H1 (cell line): ENCODE measurements at regions of chr4 and their contacts with region 1.

Region 1: DNA sequence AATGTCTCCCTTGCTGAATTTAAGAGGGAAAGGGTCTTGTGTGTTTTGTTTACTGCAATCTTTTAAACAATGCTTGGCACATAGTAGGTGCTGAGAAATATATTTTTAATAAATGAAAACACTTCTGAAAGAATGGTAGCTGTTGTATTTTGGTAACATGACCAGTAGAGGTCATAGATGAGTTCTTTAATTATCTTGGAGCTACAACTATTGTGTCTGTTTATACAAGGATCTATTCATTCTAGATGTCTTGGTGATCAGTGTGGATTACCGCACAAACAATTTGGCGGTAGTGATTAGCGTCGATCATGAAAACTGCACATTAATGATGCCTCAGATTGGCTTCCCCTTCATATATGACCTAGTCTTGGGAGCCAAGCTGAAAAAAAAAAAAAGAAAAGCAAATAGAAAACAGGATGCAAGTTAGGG is 21.4 kb upstream of the SCRG1 start:
- DNase-seq: no peak
- H3K4me3 ChIP-seq: no peak overlapping the region
- H3K27ac ChIP-seq: no peak overlapping the region
- H3K4me1 ChIP-seq: no peaks in the 10 kb centered on the region
- H3K27me3 ChIP-seq: no peaks in the 10 kb centered on the region
- CTCF ChIP-seq: peak in 2 of 3 experiments; percentile 21 to 25; a peak in 2 of 4 replicates
- EP300 ChIP-seq: no peak
- POLR2A ChIP-seq: no peak
- RAD21 ChIP-seq: peak; percentile 40 to 51

Region 2: GRCh38 chr4:173334085-173334772 is 86.1 kb before region 1 on chr4 and contains the start of gene HMGB2:
- CTCF ChIA-PET with region 1: interaction called, 6 read pairs
- POLR2A ChIA-PET with region 1: interaction called, 13 read pairs
- DNase-seq: peak; percentile 99 to 100
- H3K4me3 ChIP-seq: peak within 1 kb of the TSS; percentile 73 to 99 (median 94)
- H3K27ac ChIP-seq: peak within 1 kb of the TSS; percentile 100
- H3K4me1 ChIP-seq: peaks cover 0 to 3% (median 3%) of the 10 kb centered on the region in 4 experiments; a peak in 6 of 7 replicates
- H3K27me3 ChIP-seq: no peaks in the 10 kb centered on the region
- CTCF ChIP-seq: no peak
- EP300 ChIP-seq: peak in 1 of 2 experiments; percentile 11; a peak in 1 of 3 replicates
- POLR2A ChIP-seq: peak; percentile 95 to 99
- RAD21 ChIP-seq: no peak
- total RNA-seq, gene HMGB2: 212 and 218 TPM in 2 replicates

Region 3: DNA sequence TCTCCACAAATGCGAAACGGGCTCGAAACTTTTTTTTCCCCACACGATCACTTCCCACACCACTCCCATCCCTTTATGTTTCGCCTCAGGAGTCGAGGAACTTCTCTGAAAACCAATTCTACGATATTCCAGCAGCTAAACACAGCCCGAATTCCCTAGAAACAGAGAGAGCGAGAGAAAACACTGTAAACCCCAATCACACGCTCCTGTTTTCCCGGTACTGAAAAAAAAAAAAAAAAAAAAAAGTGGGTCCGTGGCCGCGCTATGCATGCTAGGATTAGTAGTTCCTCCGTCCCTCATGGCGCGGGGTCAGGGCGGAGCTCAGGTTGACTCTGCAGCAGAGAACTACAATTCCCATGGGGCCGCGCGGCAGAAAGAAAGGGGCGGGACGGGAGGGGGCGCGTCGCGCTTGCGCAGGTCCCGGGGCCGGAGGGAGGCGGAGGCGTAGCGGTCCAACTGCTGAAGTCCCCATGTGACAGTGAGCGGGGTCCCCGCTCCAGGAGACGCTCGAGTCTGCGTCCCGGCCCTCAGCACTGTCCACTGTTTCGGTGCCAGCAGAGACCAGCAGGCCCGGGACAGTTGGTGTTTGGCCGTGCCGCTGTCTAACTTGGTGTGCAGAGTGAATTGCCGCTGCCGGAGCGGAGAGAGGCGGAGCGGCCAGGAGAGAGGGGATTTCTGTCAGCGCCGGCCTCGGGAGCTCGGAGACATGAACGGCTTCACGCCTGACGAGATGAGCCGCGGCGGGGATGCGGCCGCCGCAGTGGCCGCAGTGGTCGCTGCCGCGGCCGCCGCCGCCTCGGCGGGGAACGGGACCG is 49.7 kb before region 1 on chr4 and contains the start of gene SAP30:
- CTCF ChIA-PET with region 1: interaction called, 12 read pairs
- POLR2A ChIA-PET with region 1: interaction called, 3 read pairs
- DNase-seq: peak; percentile 90 to 94
- H3K4me3 ChIP-seq: peak within 1 kb of the TSS; percentile 68 to 90 (median 88)
- H3K27ac ChIP-seq: 0 out of 2 replicates have a peak within 1 kb of the TSS, but pooled peaks have one; percentile 30
- H3K4me1 ChIP-seq: no peaks in the 10 kb centered on the region; a peak in 1 of 7 replicates
- H3K27me3 ChIP-seq: no peaks in the 10 kb centered on the region
- CTCF ChIP-seq: no peak
- EP300 ChIP-seq: no peak
- POLR2A ChIP-seq: peak; percentile 66 to 73
- RAD21 ChIP-seq: no peak
- total RNA-seq, gene SAP30: 17.9 and 21.1 TPM in 2 replicates

Region 4: GRCh38 chr4:173432430-173432829 is 12.1 kb after region 1 on chr4:
- CTCF ChIA-PET with region 1: interaction called, 12 read pairs
- POLR2A ChIA-PET with region 1: no interaction called
- DNase-seq: no peak
- H3K4me3 ChIP-seq: no peak overlapping the region
- H3K27ac ChIP-seq: no peak overlapping the region
- H3K4me1 ChIP-seq: peaks cover 0 to 13% (median 0%) of the 10 kb centered on the region in 4 experiments; a peak in 2 of 7 replicates
- H3K27me3 ChIP-seq: no peaks in the 10 kb centered on the region; a peak in 2 of 7 replicates
- CTCF ChIP-seq: no peak
- EP300 ChIP-seq: no peak
- POLR2A ChIP-seq: no peak
- RAD21 ChIP-seq: no peak

Region 5: DNA sequence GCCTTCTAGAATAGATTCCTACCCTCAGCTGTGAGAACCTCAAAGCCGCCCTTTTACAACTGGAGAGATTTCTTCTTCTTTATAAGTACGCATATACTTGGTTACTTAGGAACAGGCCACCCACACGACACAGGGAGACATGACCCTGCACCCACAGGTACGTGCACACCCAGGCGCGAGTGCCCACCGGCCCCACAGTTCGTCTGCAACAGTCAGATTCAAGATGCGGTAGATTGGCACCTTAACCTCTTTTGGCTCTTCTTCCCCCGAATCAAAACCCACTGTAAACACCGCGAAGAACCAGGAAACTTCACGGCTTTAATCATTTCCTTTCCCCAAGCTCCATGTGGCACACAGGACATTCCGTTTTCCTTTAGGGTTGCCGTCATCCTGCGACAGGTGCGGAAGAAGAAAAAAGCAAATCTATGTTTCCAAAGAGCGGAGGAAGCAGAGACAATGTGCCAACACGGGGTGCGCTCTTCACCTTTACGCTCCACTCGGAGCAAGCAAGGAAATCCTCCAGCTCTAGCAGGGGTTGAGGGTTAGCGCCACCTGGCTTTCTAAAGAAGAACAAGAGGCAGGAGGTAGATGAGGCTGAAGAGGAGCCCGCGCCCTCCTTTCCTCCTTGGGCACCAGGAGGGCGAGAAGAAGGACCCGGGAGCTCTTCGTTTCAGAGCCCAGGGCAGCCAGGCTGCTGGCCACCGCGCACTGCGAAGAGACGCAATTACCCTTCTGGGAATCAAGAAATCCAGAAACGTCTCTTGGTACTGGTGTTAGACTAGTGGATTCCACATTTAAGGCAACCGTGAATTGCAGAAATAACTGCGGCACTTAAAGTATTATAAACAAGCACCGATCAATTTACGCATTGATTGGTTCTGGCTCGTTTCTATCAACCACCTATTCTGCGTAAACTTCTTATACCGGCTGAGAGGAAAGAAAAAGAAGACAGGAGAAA is 74.0 kb after region 1 on chr4:
- CTCF ChIA-PET with region 1: interaction called, 16 read pairs
- POLR2A ChIA-PET with region 1: interaction called, 3 read pairs
- DNase-seq: peak; percentile 64 to 69
- H3K4me3 ChIP-seq: peak overlapping the region; percentile 16 to 51 (median 26); a peak in 6 of 8 replicates
- H3K27ac ChIP-seq: no peak overlapping the region
- H3K4me1 ChIP-seq: peaks cover 0 to 10% (median 4%) of the 10 kb centered on the region in 4 experiments; a peak in 6 of 7 replicates
- H3K27me3 ChIP-seq: peaks cover 3 to 38% (median 21%) of the 10 kb centered on the region in 4 experiments
- CTCF ChIP-seq: peak; percentile 73 to 98 (median 94)
- EP300 ChIP-seq: no peak
- POLR2A ChIP-seq: no peak
- RAD21 ChIP-seq: peak; percentile 82 to 85

Region 6: GRCh38 chr4:173635395-173635794 is 215.1 kb after region 1 on chr4:
- CTCF ChIA-PET with region 1: no interaction called
- POLR2A ChIA-PET with region 1: no interaction called
- DNase-seq: no peak
- H3K4me3 ChIP-seq: no peak overlapping the region
- H3K27ac ChIP-seq: no peak overlapping the region
- H3K4me1 ChIP-seq: no peaks in the 10 kb centered on the region
- H3K27me3 ChIP-seq: peaks cover 0 to 1% (median 0%) of the 10 kb centered on the region in 4 experiments; a peak in 1 of 7 replicates
- CTCF ChIP-seq: no peak
- EP300 ChIP-seq: no peak
- POLR2A ChIP-seq: no peak
- RAD21 ChIP-seq: no peak

Region 7: DNA sequence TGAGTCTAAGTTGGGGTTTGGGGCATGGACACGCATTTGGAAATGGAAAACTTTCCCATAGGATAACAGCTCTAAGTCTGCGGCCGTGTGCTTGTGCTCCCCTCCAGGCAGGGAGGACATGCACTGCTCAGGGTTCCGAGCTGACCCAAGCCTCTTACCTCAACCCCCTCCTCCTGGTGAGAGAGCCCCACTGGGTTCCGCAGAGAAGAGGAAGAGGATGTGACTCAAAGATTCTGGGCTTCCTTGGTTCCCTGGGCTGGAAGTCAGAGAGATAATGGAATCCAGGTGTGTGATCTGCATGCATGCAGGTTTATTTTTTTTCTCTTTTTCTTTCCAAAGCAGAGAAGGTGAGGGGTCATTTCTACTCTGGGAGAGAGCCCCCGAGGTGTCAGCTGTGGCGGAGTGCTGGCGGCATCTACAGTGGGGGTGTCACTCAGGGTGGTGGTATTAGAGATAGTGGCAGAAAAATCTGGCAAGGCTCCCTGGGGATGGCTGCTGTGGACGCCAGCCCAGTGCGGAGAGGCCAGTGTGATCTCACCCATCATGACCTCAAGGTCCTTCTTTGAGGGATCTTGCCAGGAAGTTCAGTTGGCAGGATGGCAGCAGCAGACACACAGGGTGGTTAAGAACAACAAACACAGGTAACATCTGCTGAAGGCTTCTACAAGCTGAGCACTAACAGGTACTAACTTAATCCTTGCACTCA is 278.4 kb after region 1 on chr4:
- CTCF ChIA-PET with region 1: no interaction called
- POLR2A ChIA-PET with region 1: no interaction called
- DNase-seq: no peak
- H3K4me3 ChIP-seq: no peak overlapping the region
- H3K27ac ChIP-seq: no peak overlapping the region
- H3K4me1 ChIP-seq: no peaks in the 10 kb centered on the region
- H3K27me3 ChIP-seq: peaks cover 0 to 1% (median 0%) of the 10 kb centered on the region in 4 experiments; a peak in 1 of 7 replicates
- CTCF ChIP-seq: no peak
- EP300 ChIP-seq: no peak
- POLR2A ChIP-seq: no peak
- RAD21 ChIP-seq: no peak